OCI-LY7 (cell line): ENCODE measurements at regions of chr1 and their contacts with region 1.

Region 1: GRCh38 chr1:46667782-46668760 is at the start of gene ATPAF1:
- DNase-seq: peak; percentile 71
- H3K4me3 ChIP-seq: peak within 1 kb of the TSS; percentile 88
- H3K27ac ChIP-seq: no peak within 1 kb of the TSS
- H3K4me1 ChIP-seq: peaks cover 14% of the 10 kb centered on the region
- CTCF ChIP-seq: peak; percentile 33; the same call in 1 of the 2 replicates
- total RNA-seq, gene ATPAF1: 37.1 and 38.3 TPM in 2 replicates

Region 2: GRCh38 chr1:46368791-46369190 is 299.3 kb before region 1 on chr1:
- CTCF ChIA-PET with region 1: no interaction called
- POLR2A ChIA-PET with region 1: no interaction called
- intact Hi-C with region 1: no loop called
- DNase-seq: no peak
- H3K4me3 ChIP-seq: no peak overlapping the region
- H3K27ac ChIP-seq: no peak overlapping the region
- H3K4me1 ChIP-seq: peaks cover 17% of the 10 kb centered on the region
- CTCF ChIP-seq: no peak

Region 3: GRCh38 chr1:46569884-46570725 is 98.0 kb before region 1 on chr1:
- CTCF ChIA-PET with region 1: no interaction called
- POLR2A ChIA-PET with region 1: no interaction called
- intact Hi-C with region 1: no loop called
- DNase-seq: no peak
- H3K4me3 ChIP-seq: no peak overlapping the region
- H3K27ac ChIP-seq: no peak overlapping the region
- H3K4me1 ChIP-seq: no peaks in the 10 kb centered on the region
- CTCF ChIP-seq: no peak

Region 4: GRCh38 chr1:46718727-46719622 is 50.9 kb after region 1 on chr1 and contains the start of gene EFCAB14:
- CTCF ChIA-PET with region 1: no interaction called
- POLR2A ChIA-PET with region 1: interaction called, 9 read pairs
- intact Hi-C with region 1: loop called (anchors 1 kb)
- DNase-seq: peak; percentile 99
- H3K4me3 ChIP-seq: peak within 1 kb of the TSS; percentile 77
- H3K27ac ChIP-seq: peak within 1 kb of the TSS; percentile 12
- H3K4me1 ChIP-seq: peaks cover 26% of the 10 kb centered on the region
- CTCF ChIP-seq: no peak
- total RNA-seq, gene EFCAB14: 24.8 and 29.9 TPM in 2 replicates

Region 5: DNA sequence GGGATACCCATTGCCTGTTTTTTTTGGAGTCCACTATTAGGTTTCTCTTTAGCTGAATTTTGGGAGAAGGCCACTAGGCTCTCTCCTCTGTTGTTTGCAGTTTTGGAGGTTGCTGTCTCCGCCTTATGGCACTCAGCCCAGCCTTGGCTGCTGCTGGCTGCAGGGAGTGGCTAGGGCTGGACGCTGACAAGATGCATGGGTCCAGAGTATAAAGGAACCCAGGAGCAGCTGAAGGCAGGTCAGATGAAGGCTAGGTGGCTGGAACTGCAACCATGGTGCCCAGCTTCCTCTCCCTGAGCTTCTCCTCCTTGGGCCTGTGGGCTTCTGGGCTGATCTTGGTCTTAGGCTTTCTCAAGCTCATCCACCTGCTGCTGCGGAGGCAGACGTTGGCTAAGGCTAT is 130.7 kb after region 1 on chr1 and contains the start of gene CYP4B1:
- CTCF ChIA-PET with region 1: no interaction called
- POLR2A ChIA-PET with region 1: no interaction called
- intact Hi-C with region 1: no loop called
- DNase-seq: no peak
- H3K4me3 ChIP-seq: no peak within 1 kb of the TSS
- H3K27ac ChIP-seq: no peak within 1 kb of the TSS
- H3K4me1 ChIP-seq: no peaks in the 10 kb centered on the region
- CTCF ChIP-seq: no peak
- total RNA-seq, gene CYP4B1: not detected in 2 replicates